HepG2 (cell line): ENCODE measurements at regions of chr4 and their contacts with region 1.

Region 1: GRCh38 chr4:27048429-27049238 is 188.0 kb downstream of the STIM2 start:
- DNase-seq: no peak
- ATAC-seq: peak; percentile 33; the same call in 1 of the 3 replicates
- H3K4me3 ChIP-seq: no peak overlapping the region
- H3K27ac ChIP-seq: no peak overlapping the region
- H3K4me1 ChIP-seq: peaks cover 2% of the 10 kb centered on the region
- H3K27me3 ChIP-seq: peaks cover 3 to 39% of the 10 kb centered on the region in 2 experiments; a peak in 3 of 5 replicates
- CTCF ChIP-seq: peak; percentile 61
- EP300 ChIP-seq: no peak
- POLR2A ChIP-seq: no peak
- RAD21 ChIP-seq: no peak

Region 2: DNA sequence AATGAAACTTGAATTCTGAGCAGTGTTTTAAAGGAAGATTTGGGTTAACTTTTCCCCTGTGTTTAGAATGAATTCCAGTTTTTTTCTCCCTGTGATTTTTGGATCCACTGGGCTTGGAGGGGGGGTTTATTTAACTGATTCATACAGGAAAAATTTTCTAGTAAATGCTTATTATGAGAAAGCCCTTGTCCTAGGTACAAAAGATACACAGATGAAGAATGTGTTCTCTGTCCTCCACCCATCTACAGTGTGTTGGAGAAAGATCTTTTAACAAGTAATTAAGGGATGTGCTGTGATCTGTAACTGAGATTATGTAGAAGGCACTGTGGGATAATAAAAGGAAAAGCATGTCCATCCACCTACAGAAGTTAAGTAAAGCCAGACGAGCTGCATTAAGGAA is 84.1 kb before region 1 on chr4:
- CTCF ChIA-PET with region 1: no interaction called
- POLR2A ChIA-PET with region 1: no interaction called
- in situ Hi-C with region 1: no loop called
- intact Hi-C with region 1: no loop called
- DNase-seq: no peak
- ATAC-seq: no peak
- H3K4me3 ChIP-seq: no peak overlapping the region
- H3K27ac ChIP-seq: no peak overlapping the region
- H3K4me1 ChIP-seq: 0 out of 2 replicates have a peak, but pooled peaks cover 7% of the 10 kb centered on the region
- H3K27me3 ChIP-seq: no peaks in the 10 kb centered on the region
- CTCF ChIP-seq: no peak
- EP300 ChIP-seq: no peak
- POLR2A ChIP-seq: no peak
- RAD21 ChIP-seq: no peak

Region 3: DNA sequence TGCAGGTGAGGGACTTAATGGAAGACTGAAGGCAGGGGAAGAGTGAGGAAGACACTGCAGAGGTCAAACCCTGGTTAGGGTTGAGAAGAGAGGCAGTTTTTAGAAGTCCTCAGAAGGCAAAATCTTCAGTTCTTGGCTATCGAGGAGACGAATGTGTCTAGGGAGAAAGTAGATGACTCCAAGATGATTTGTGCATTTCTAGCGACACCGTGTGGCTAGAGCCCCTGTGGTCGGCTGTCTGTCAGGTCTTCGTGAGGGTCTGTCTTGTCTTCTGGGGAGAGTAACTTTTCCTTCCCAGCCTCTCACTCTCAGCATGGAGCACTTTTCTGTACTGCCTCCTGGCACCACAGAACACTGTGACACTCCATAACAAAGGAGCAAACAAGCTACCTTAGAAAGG is 270.1 kb after region 1 on chr4:
- CTCF ChIA-PET with region 1: interaction called, 18 read pairs
- POLR2A ChIA-PET with region 1: no interaction called
- in situ Hi-C with region 1: loop called (anchors 5 kb)
- intact Hi-C with region 1: loop called (anchors 1 kb)
- DNase-seq: peak; percentile 22
- ATAC-seq: peak; percentile 84
- H3K4me3 ChIP-seq: no peak overlapping the region
- H3K27ac ChIP-seq: no peak overlapping the region
- H3K4me1 ChIP-seq: no peaks in the 10 kb centered on the region
- H3K27me3 ChIP-seq: no peaks in the 10 kb centered on the region
- CTCF ChIP-seq: peak; percentile 66
- EP300 ChIP-seq: no peak
- POLR2A ChIP-seq: no peak
- RAD21 ChIP-seq: 0 out of 2 replicates have a peak, but pooled peaks have one; percentile 26